Activated CD4-positive, alpha-beta memory T cell treated with anti-CD3 and anti-CD28 coated beads for 36 hours (primary cell): ENCODE measurements at regions of chr16 and their contacts with region 1.

Region 1: DNA sequence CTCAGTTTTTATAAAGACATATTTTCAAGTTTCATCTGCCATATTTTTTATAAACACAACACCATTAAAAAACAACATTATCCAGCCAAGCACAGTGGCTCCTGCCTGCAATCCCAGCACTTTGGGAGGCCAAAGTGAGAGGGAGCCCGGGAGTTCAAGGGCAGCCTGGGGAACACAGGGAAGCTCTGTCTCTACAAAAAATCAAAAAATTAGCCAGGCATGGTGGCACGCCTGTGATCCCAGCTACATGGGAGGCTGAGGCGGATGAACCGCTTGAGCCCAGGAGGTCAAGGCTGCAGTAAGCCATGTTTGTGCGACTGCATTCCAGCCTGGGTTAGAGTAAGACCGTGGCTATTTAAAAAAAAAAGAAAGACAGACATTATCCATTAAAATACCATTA is 17.2 kb upstream of the NTAN1 start:
- DNase-seq: no peak
- H3K4me3 Mint-ChIP-seq: no peak overlapping the region
- H3K27ac Mint-ChIP-seq: no peak overlapping the region
- H3K4me1 Mint-ChIP-seq: peaks cover 13% of the 10 kb centered on the region
- H3K27me3 Mint-ChIP-seq: no peaks in the 10 kb centered on the region

Region 2: DNA sequence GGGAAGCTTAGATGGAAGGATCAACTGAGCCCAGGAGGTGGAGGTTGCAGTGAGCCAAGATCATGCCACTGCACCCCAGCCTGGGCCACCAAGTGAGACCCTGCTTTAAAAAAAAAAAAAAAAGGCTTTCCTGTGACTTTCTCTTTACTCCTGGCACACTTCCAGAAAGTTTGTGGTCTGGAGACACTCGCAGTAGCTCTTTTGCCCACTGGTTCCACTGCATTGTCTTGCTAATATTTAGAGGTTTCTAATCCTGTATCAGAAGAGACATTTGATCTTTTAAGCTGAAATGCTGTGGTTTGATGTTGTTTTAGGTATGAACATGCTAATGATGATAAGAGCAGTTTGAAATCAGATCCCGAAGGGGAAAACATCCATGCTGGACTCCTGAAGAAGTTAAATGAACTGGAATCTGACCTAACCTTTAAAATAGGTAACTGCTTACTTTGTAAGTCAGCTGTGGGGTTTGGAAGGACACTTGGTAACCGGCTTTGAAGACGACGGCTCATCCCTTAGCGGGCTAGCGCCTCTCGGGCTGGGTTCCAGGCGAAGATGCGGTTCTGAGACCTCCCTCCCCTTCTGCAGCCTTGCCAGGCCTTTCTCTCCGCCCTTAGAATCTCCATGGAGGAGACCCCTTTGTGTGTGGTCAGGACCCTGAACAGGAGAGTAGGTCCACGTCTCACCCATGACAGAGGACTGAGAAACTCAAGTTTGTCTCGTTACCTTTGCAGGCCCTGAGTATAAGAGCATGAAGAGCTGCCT is 40.4 kb before region 1 on chr16:
- CTCF ChIA-PET with region 1: no interaction called
- POLR2A ChIA-PET with region 1: no interaction called
- intact Hi-C with region 1: no loop called
- DNase-seq: no peak
- H3K4me3 Mint-ChIP-seq: no peak overlapping the region
- H3K27ac Mint-ChIP-seq: no peak overlapping the region
- H3K4me1 Mint-ChIP-seq: peaks cover 9% of the 10 kb centered on the region
- H3K27me3 Mint-ChIP-seq: no peaks in the 10 kb centered on the region

Region 3: DNA sequence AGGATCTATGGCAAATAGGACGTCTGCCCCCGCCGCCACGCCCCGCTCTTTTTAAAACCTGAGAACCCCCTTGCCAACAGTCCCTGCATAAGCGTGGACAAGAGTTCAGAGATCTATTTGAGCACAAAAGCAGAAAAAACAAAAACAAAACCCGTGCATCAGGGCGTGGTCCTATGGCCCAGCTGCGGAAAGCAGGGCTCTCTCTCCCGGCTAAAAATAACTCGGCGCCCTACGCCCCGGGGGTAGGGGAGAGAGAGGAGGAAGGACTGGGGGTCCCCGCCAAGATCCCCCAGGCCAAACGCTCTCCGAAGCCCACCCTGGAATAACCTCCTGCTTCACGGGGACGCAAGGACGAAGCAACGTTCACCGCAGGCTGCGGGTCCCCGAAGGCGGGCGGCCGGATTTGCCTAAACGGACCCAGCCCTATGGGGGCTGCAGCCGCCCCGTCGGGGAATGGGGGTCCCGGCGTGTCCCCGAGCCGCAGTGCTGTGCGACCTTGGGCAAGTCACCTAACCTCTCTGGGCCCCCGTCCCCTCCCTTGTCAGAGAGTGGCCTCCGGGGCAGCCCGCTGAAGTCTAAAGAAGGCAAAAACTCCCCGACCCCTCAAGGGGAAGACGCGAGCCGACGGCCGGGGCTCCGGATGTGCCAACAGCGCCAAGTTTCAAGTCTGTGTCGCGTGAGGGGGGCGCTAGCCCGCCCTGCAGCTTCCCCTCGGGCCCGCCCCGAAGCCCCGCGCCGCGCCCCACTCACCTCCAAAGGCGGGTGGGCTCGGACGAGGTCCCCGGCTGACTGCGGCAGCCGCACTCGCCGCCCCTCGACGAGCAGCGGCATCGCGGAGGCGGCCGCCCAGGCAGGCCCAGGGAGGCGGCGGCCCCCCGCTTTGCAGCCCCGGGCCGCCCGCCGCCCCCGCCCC is 17.7 kb before region 1 on chr16:
- CTCF ChIA-PET with region 1: interaction called, 18 read pairs
- POLR2A ChIA-PET with region 1: no interaction called
- intact Hi-C with region 1: no loop called
- DNase-seq: peak; percentile 74
- H3K4me3 Mint-ChIP-seq: peak overlapping the region; percentile 85
- H3K27ac Mint-ChIP-seq: peak overlapping the region; percentile 5
- H3K4me1 Mint-ChIP-seq: peaks cover 15% of the 10 kb centered on the region
- H3K27me3 Mint-ChIP-seq: no peaks in the 10 kb centered on the region

Region 4: GRCh38 chr16:15427648-15428239 is 354.6 kb after region 1 on chr16:
- CTCF ChIA-PET with region 1: no interaction called
- POLR2A ChIA-PET with region 1: no interaction called
- intact Hi-C with region 1: no loop called
- DNase-seq: peak; percentile 68
- H3K4me3 Mint-ChIP-seq: no peak overlapping the region
- H3K27ac Mint-ChIP-seq: no peak overlapping the region
- H3K4me1 Mint-ChIP-seq: peaks cover 2% of the 10 kb centered on the region
- H3K27me3 Mint-ChIP-seq: peaks cover 2% of the 10 kb centered on the region